ENCODE measurements at regions of chr11 and their contacts with region 1.

Region 1: GRCh38 chr11:128624269-128625175 is 37.2 kb upstream of the ETS1 start:
- DNase-seq: peak; percentile 67
- CTCF ChIP-seq: no peak

Region 2: GRCh38 chr11:128610721-128611617 is 13.6 kb before region 1 on chr11:
- CTCF ChIA-PET with region 1: interaction called, 87 read pairs
- POLR2A ChIA-PET with region 1: interaction called, 3 read pairs
- DNase-seq: peak; percentile 80
- CTCF ChIP-seq: no peak

Measured in GM10248 (cell line).